Ovary (tissue), 10 donors: ENCODE measurements at regions of chr6 and their contacts with region 1.

Region 1: DNA sequence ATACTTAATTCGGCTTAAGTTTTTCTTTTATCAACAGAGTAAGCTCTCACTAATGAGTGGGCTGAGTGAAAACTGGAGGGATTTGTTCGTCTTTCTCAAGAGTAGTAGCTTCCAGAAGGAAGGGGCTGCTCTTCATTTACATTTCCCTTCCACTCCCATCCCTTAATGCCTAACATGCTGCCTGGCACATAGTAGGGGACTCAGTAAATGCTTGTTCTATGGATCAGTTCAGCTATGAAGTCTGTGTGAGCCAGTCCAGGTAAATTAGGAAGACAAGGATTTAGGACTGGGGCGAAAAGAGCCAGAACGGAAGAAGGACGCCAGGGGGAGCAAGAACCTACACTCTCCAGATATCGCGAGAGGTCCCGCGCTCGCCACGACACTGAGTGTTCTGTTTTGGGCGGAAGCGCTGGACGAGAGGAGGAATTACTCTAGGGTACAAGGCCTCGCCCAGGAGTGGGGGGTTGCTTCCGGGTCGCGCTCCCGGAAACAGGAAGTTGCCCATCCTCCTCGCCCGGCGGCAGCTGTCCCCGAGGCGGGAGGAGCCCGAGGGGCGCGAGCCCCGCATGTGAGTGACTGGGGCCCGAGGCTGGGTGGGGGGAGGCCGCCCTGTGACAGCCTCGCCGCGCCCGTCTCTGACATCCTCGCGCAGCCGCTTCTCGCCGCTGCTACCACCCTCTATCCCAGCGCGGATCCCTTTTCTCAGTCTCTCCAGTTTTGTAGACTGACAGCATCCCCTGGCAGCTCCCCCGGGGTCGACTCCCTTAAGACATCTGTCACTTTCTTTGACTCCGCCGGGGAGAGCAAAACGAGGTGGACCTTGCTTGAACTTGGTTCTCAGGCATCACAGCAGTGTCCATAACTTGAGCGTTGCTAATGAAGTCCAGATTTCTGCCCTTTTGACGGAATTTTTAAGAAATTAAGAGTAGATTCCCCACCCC is at the start of gene C6orf89:
- DNase-seq: peak; percentile 96 to 98 (median 98)
- H3K4me3 ChIP-seq: peak within 1 kb of the TSS; percentile 72
- H3K27ac ChIP-seq: peak within 1 kb of the TSS; percentile 67 to 78
- H3K4me1 ChIP-seq: peaks cover 3% of the 10 kb centered on the region
- H3K27me3 ChIP-seq: no peaks in the 10 kb centered on the region
- CTCF ChIP-seq: peak; percentile 87 to 97 (median 97)
- EP300 ChIP-seq: no peak
- POLR2A ChIP-seq: peak; percentile 83
- total RNA-seq, gene C6orf89: 23.1 to 73.8 (median 62.2) TPM

Region 2: DNA sequence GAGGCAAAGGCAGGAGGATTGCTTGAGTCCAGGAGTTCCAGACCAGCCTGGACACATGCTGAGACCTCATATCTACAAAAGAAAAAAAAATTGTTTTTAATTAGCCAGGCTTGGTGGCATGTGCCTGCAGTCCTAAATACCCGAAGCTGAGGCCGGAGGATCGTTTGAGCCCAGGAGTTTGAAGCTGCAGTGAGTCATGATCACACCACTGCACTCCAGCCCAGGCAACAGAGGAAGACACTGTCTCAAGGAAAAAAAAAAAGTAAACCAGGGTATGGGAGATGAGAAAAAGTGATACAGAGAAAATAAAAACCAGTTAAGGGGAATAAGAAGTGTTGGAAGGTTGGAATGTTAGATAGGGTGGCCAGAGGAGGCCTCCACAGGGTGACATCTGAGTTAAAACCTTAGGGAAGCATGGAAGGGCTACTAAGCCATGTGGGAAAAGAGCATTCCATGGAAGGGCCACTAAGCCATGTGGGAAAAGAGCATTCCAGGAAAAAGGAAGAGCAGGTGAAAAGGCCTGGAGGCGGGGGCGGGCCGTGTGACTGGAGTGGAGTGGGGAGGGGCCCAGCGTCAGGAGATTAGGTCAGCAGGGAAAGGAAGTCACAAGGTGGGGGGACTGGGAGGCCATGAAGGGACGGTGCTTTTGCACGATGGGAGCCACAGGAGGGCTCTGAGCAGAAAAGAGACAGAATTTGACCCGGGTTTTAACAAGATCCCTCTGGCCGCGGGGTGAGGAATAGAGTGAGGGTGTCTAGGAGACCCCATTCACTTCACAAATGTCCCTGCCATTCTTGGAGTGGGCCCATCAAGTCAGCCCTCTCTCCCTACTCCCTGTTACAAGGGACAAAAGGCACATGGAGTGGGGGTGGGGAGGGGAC is 64.8 kb before region 1 on chr6:
- intact Hi-C with region 1: no loop called
- DNase-seq: no peak
- H3K4me3 ChIP-seq: no peak overlapping the region
- H3K27ac ChIP-seq: no peak overlapping the region
- H3K4me1 ChIP-seq: no peaks in the 10 kb centered on the region
- H3K27me3 ChIP-seq: no peaks in the 10 kb centered on the region
- CTCF ChIP-seq: no peak
- EP300 ChIP-seq: no peak
- POLR2A ChIP-seq: no peak

Region 3: DNA sequence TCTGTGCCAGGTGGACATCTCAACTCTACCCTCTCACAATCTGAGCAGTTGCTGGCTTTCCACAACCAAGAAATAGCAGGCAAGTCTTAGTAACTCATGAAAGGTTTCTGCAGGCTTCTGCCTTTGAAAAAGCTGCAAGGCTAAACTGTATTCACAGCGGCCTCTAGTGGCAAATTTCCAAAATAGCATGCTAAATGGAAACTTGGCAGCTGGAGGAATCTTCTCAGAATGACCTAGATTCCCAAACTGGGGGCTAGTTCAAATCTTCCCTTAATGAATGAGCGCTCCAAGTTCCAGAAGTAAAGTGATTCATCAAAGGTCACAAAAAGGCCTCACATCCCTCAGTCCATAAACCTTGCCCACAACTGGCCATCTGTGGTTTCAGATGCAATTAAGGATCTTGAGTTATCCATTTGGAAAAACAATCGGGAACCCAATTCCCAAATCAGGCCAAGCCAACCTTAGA is 34.5 kb before region 1 on chr6:
- intact Hi-C with region 1: no loop called
- DNase-seq: peak in 2 of 5 donors; percentile 48 to 76
- H3K4me3 ChIP-seq: no peak overlapping the region
- H3K27ac ChIP-seq: no peak overlapping the region
- H3K4me1 ChIP-seq: no peaks in the 10 kb centered on the region
- H3K27me3 ChIP-seq: no peaks in the 10 kb centered on the region
- CTCF ChIP-seq: peak; percentile 38 to 69 (median 63)
- EP300 ChIP-seq: no peak
- POLR2A ChIP-seq: no peak

Region 4: DNA sequence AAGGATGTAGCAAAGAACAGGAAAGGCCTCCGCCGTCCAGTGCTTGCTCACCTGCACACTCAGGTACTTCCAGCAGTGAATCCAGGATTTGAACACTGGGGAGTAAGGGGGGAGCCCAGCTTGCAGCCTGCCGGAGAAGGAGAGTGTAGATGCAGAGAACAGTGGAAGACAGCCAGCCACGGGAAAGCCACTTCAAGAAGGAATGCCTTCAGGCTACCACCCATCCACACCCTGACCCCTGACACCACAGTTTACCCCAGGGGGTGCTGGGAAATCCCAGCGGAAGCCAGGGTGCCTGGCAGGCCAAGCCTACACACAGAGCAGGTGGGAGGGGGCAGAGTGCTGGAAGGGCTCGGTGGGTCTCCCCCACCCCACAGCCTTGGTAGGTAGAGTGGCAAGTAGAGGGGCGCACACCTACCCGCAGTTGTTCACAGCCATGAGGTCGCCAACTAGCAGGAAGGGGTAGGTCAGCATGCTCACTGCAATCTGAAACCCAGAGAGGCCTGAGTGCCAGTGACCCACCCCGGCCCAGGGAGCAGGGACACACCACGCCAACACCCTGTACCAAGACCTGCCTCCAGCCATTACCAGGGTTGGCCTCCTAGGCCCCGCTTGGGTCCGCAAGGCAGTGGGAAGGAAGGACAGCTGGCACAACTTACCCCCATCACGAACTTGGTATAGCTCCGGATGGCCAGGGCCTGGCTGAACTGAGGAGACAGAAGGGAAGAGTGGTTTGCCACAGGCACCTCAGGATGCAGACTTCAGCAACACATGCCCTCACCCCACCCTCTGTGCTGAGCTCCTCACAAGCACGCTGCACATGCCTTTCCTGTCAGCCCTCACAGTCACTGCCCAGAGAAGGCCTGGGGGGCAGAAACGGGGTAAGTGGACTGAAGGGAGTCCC is 84.5 kb after region 1 on chr6:
- intact Hi-C with region 1: loop called in 1 of 4 experiments (anchors 5 kb)
- DNase-seq: no peak
- H3K4me3 ChIP-seq: no peak overlapping the region
- H3K27ac ChIP-seq: no peak overlapping the region
- H3K4me1 ChIP-seq: peaks cover 1% of the 10 kb centered on the region
- H3K27me3 ChIP-seq: no peaks in the 10 kb centered on the region
- CTCF ChIP-seq: no peak
- EP300 ChIP-seq: no peak
- POLR2A ChIP-seq: no peak

Region 5: GRCh38 chr6:36979347-36979742 is 93.6 kb after region 1 on chr6:
- intact Hi-C with region 1: loop called (anchors 2 to 10 kb)
- DNase-seq: peak; percentile 66 to 79 (median 72)
- H3K4me3 ChIP-seq: no peak overlapping the region
- H3K27ac ChIP-seq: no peak overlapping the region
- H3K4me1 ChIP-seq: peaks cover 6% of the 10 kb centered on the region
- H3K27me3 ChIP-seq: no peaks in the 10 kb centered on the region
- CTCF ChIP-seq: peak; percentile 33 to 88 (median 59)
- EP300 ChIP-seq: no peak
- POLR2A ChIP-seq: no peak

Region 6: DNA sequence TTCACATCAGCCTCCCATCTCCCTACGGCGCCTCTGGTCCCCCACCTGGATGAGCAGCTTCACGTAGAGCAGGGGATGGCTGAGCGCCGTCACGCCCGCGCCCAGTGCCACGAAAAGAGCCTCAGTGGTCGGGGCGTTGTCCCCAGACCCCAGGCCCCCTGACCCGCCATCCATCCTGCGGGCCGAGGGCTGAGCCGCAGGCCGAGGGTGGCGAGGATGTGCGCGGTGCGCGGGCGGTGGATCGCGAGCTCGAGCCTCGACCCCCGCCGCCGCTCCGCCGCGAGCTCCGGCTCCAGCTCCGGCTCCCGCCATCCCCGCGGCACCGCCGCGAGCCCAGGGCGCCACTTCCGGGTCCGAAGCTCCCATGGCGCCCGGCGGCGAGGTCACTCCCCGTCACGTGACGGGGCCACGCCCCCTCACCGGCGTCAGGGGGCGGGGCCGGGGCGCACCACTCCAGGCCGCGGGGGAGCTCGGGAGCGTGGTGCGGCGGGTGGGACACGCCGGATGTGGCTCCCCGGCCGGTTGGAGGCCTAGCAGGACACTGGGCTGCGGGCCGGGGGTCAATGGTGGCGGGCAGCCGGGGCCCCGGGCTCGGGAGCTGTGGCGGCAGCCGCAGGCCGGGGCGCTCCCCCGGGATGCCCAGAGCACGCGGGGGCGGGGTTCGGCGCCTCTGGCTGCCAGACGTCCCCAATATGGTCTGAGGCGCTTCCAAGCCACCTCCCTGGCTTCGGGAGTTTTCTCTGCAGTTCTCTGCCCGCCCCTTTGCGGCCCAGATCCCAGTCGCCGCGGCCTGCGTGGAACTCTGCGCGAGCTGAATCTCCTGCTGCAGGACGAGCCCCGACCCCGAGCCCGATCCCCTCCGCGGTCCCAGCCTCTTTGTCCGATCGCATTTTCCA is 100.3 kb after region 1 on chr6 and contains the start of gene MTCH1:
- intact Hi-C with region 1: loop called in 2 of 4 experiments (anchors 10 kb)
- DNase-seq: peak; percentile 89 to 94 (median 92)
- H3K4me3 ChIP-seq: peak within 1 kb of the TSS; percentile 95
- H3K27ac ChIP-seq: peak within 1 kb of the TSS; percentile 96 to 98
- H3K4me1 ChIP-seq: peaks cover 10% of the 10 kb centered on the region
- H3K27me3 ChIP-seq: no peaks in the 10 kb centered on the region
- CTCF ChIP-seq: peak in 1 of 3 donors; percentile 29
- EP300 ChIP-seq: no peak
- POLR2A ChIP-seq: peak; percentile 90
- total RNA-seq, gene MTCH1: 127 to 223 (median 186) TPM

Region 7: DNA sequence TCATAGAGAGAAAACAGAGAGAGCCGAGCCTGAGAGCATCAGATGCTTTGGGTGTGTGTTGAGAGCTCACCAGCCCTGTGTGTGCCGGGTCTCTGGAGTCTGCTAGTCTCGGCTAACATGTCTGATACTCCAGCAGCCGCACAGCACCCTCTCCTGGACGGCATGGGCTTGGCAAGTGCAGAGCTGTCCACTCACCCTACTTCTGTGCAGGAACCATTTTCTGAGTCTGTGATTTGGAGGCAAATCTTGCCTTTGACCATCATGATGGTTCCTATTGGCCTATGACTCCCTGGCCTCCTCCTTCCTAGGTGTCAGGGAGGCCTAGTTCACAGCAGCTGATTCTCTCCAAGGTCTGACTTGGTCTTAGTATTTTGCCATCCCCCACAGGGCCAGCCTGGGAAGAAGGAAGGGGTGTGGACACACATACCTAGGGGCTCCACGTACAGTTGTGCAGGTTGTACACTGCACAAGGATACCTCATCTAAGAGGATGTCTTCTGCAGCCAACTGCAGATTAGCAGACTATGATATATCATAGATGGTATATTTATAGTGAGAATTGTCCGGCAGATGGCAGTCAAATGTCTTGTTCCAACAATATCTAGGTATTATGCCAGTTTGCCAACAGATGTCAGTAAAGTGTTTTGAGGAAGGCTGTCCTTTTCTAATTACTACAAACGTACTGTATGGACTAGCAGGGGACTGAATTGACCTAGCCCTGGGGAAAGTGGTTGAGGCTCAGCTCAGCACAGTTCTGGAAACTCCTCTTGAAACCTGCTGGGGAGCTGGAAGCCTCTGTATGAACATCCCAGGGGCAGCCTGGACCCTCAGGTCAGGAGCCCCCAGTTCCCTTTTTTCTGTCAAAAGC is 132.7 kb after region 1 on chr6:
- intact Hi-C with region 1: loop called in 2 of 4 experiments (anchors 5 kb)
- DNase-seq: peak; percentile 89 to 94 (median 91)
- H3K4me3 ChIP-seq: no peak overlapping the region
- H3K27ac ChIP-seq: no peak overlapping the region
- H3K4me1 ChIP-seq: no peaks in the 10 kb centered on the region
- H3K27me3 ChIP-seq: no peaks in the 10 kb centered on the region
- CTCF ChIP-seq: peak; percentile 70 to 81 (median 80)
- EP300 ChIP-seq: no peak
- POLR2A ChIP-seq: no peak